ENCODE measurements at regions of chr13 and their contacts with region 1.

Region 1: GRCh38 chr13:100573121-100573520 is 15.5 kb downstream of the GGACT start:
- DNase-seq: peak; percentile 19 to 75
- H3K4me3 ChIP-seq: no peak overlapping the region
- H3K27ac ChIP-seq: no peak overlapping the region
- H3K4me1 ChIP-seq: no peaks in the 10 kb centered on the region
- H3K27me3 ChIP-seq: no peaks in the 10 kb centered on the region
- CTCF ChIP-seq: peak; percentile 6 to 84 (median 80)
- EP300 ChIP-seq: 0 out of 3 replicates have a peak, but pooled peaks of 1 of the 2 experiments have one; percentile 6
- POLR2A ChIP-seq: no peak
- RAD21 ChIP-seq: peak; percentile 73 to 81

Region 2: DNA sequence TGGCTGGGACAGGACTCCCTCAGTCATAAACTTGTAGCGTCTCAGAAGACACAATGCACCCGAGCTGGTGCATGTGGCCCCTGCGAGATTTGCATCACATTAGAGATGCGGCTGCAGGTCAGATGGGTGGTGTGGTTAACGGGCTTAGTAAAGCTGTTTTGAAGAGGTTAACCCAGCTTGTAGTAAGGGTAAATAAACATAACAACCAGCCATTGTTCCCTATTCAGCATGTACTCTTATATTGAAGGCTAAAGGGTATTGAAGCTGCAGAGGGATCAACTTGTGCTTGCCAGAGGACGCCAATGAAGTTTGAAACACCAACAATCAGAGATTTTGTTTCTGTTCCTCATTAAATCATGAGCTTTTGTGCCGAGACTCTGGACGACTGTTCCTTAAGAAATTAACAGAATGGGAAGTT is 680.9 kb before region 1 on chr13:
- CTCF ChIA-PET with region 1: no interaction called
- POLR2A ChIA-PET with region 1: no interaction called
- DNase-seq: peak; percentile 49 to 66
- H3K4me3 ChIP-seq: peak overlapping the region in 3 of 4 experiments; percentile 20 to 35 (median 34); a peak in 6 of 8 replicates
- H3K27ac ChIP-seq: no peak overlapping the region
- H3K4me1 ChIP-seq: peaks cover 9 to 30% (median 17%) of the 10 kb centered on the region in 4 experiments
- H3K27me3 ChIP-seq: peaks cover 0 to 22% (median 18%) of the 10 kb centered on the region in 4 experiments; a peak in 5 of 7 replicates
- CTCF ChIP-seq: no peak
- EP300 ChIP-seq: peak in 1 of 2 experiments; percentile 17; a peak in 1 of 3 replicates
- POLR2A ChIP-seq: no peak
- RAD21 ChIP-seq: peak in 1 of 2 experiments; percentile 20; a peak in 1 of 4 replicates

Region 3: DNA sequence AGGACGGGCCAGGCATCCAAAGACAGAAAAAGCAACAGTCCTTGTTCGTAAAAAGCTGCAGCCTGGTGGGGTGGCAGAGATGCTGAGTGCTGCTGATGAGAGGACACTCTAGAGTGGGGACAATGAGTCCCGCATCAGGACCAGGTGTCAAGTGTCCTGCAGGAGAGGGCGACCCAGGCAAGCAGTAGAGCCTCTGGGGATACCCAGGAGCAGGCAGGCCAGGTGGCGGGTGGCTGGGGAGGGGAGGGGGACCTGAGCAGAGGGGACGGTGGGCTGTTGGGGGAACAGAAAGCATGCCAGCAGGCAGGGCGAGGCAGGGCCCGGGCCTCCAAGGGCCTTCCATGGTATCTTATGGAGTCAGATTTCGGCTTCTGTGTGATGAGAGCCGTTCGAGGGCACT is 20.4 kb before region 1 on chr13:
- CTCF ChIA-PET with region 1: interaction called, 11 read pairs
- POLR2A ChIA-PET with region 1: no interaction called
- DNase-seq: no peak
- H3K4me3 ChIP-seq: no peak overlapping the region
- H3K27ac ChIP-seq: no peak overlapping the region
- H3K4me1 ChIP-seq: no peaks in the 10 kb centered on the region; a peak in 1 of 7 replicates
- H3K27me3 ChIP-seq: no peaks in the 10 kb centered on the region
- CTCF ChIP-seq: no peak
- EP300 ChIP-seq: no peak
- POLR2A ChIP-seq: no peak
- RAD21 ChIP-seq: no peak

Region 4: GRCh38 chr13:100560498-100561157 is 12.5 kb before region 1 on chr13:
- CTCF ChIA-PET with region 1: interaction called, 42 read pairs
- POLR2A ChIA-PET with region 1: no interaction called
- DNase-seq: no peak
- H3K4me3 ChIP-seq: no peak overlapping the region
- H3K27ac ChIP-seq: no peak overlapping the region
- H3K4me1 ChIP-seq: no peaks in the 10 kb centered on the region
- H3K27me3 ChIP-seq: no peaks in the 10 kb centered on the region
- CTCF ChIP-seq: no peak
- EP300 ChIP-seq: no peak
- POLR2A ChIP-seq: no peak
- RAD21 ChIP-seq: no peak

Region 5: DNA sequence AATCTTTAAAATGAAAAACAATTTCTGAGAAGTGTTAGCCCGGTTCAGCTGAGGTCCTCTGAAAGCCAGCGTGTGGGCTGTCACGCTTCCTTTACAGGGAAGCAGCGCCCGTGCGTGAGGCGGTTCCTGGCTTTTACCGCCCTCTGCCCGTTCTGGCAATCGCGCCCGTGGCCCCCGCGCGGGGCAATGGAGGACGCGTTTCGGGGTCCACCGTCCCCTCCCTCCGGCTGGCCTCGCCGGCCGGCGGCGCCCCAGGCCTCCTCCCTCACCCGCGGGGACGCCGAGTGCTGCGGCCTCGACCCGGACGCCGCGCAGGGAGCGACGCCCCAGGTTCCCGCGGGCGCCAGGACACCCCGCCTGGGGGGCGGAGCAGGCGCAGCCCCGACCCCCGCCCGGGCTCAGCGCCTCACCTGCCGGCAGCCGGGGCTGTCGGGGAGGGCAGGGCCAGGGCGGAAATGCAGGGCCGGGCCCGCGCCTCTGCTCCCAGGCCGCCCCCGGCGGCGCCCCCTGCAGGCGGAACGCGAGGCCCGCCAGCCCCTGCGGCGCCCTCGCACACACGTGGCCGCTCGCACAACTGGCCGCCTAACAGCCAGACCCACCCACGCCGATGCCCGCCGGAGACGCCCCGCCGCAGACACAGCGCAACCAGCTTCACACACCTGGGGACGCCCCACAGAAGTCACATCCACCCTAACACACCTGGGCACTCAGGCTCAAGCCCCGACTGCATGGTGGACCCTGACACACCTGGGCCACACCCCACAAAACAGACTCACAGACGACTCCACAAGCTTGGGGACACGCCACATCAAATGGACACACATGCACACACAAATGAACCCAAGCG is 15.4 kb after region 1 on chr13 and contains the start of gene GGACT:
- CTCF ChIA-PET with region 1: interaction called, 128 read pairs
- POLR2A ChIA-PET with region 1: interaction called, 3 read pairs
- DNase-seq: peak; percentile 43 to 93
- H3K4me3 ChIP-seq: peak within 1 kb of the TSS; percentile 48 to 83 (median 62)
- H3K27ac ChIP-seq: no peak within 1 kb of the TSS
- H3K4me1 ChIP-seq: peaks cover 0 to 2% (median 0%) of the 10 kb centered on the region in 4 experiments; a peak in 1 of 7 replicates
- H3K27me3 ChIP-seq: peaks cover 0 to 6% (median 6%) of the 10 kb centered on the region in 4 experiments; a peak in 6 of 7 replicates
- CTCF ChIP-seq: peak; percentile 76 to 93 (median 87)
- EP300 ChIP-seq: peak in 1 of 2 experiments; percentile 12; a peak in 1 of 3 replicates
- POLR2A ChIP-seq: peak in 1 of 2 experiments; percentile 61; a peak in 1 of 3 replicates
- RAD21 ChIP-seq: peak; percentile 35 to 62; a peak in 3 of 4 replicates
- total RNA-seq, gene GGACT: 0.77 and 1.5 TPM in 2 replicates

Region 6: DNA sequence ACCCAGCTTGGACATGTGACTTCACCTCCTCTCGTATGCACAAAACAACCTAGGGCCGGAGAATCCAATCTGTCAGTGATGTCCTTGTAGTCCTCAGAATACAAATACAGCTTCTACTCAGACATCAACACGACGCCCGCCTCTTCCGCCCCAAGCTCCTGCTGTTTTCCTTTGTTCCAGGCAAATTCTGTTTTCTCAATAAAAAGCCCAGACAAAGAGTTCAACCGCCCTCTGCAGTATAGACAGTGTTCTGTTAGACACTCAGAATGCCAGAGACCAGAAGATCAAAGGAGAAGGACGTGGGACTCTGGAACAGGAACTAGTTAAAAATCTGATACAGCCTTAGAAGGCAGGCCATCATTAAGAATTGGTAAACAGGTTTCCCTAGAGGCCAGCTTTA is 57.4 kb after region 1 on chr13:
- CTCF ChIA-PET with region 1: interaction called, 14 read pairs
- POLR2A ChIA-PET with region 1: no interaction called
- DNase-seq: no peak
- H3K4me3 ChIP-seq: no peak overlapping the region
- H3K27ac ChIP-seq: no peak overlapping the region
- H3K4me1 ChIP-seq: peaks cover 0 to 6% (median 3%) of the 10 kb centered on the region in 4 experiments; a peak in 2 of 7 replicates
- H3K27me3 ChIP-seq: no peaks in the 10 kb centered on the region
- CTCF ChIP-seq: no peak; a peak in 1 of 4 replicates
- EP300 ChIP-seq: no peak
- POLR2A ChIP-seq: no peak
- RAD21 ChIP-seq: peak; percentile 8 to 37; a peak in 2 of 4 replicates

Region 7: GRCh38 chr13:100680131-100680530 is 107.0 kb after region 1 on chr13:
- CTCF ChIA-PET with region 1: no interaction called
- POLR2A ChIA-PET with region 1: no interaction called
- DNase-seq: no peak
- H3K4me3 ChIP-seq: no peak overlapping the region
- H3K27ac ChIP-seq: no peak overlapping the region
- H3K4me1 ChIP-seq: peaks cover 0 to 4% (median 2%) of the 10 kb centered on the region in 4 experiments; a peak in 4 of 7 replicates
- H3K27me3 ChIP-seq: peaks cover 0 to 9% (median 3%) of the 10 kb centered on the region in 4 experiments; a peak in 4 of 7 replicates
- CTCF ChIP-seq: no peak
- EP300 ChIP-seq: no peak
- POLR2A ChIP-seq: no peak
- RAD21 ChIP-seq: no peak

Region 8: GRCh38 chr13:101127741-101128353 is 554.7 kb after region 1 on chr13:
- CTCF ChIA-PET with region 1: interaction called, 10 read pairs
- POLR2A ChIA-PET with region 1: no interaction called
- DNase-seq: no peak
- H3K4me3 ChIP-seq: no peak overlapping the region
- H3K27ac ChIP-seq: no peak overlapping the region
- H3K4me1 ChIP-seq: no peaks in the 10 kb centered on the region
- H3K27me3 ChIP-seq: no peaks in the 10 kb centered on the region
- CTCF ChIP-seq: peak in 2 of 3 experiments; percentile 53 to 67; a peak in 2 of 4 replicates
- EP300 ChIP-seq: no peak
- POLR2A ChIP-seq: no peak
- RAD21 ChIP-seq: peak; percentile 71 to 74

Measured in H1 (cell line).